ENCODE measurements at regions of chr4 and their contacts with region 1.

Region 1: GRCh38 chr4:153261461-153261860 is 57.2 kb downstream of the TRIM2 start:
- DNase-seq: no peak
- ATAC-seq: no peak
- H3K4me3 ChIP-seq: no peak overlapping the region
- H3K27ac ChIP-seq: no peak overlapping the region
- H3K4me1 ChIP-seq: peaks cover 6% of the 10 kb centered on the region; the same call in 1 of the 2 replicates
- H3K27me3 ChIP-seq: no peaks in the 10 kb centered on the region
- CTCF ChIP-seq: no peak

Region 2: GRCh38 chr4:153276971-153277370 is 15.5 kb after region 1 on chr4:
- CTCF ChIA-PET with region 1: no interaction called
- POLR2A ChIA-PET with region 1: interaction called, 10 read pairs
- in situ Hi-C with region 1: no loop called
- intact Hi-C with region 1: no loop called
- DNase-seq: no peak
- ATAC-seq: no peak
- H3K4me3 ChIP-seq: no peak overlapping the region
- H3K27ac ChIP-seq: no peak overlapping the region
- H3K4me1 ChIP-seq: no peaks in the 10 kb centered on the region
- H3K27me3 ChIP-seq: no peaks in the 10 kb centered on the region
- CTCF ChIP-seq: no peak

Region 3: GRCh38 chr4:153393397-153393796 is 131.9 kb after region 1 on chr4:
- CTCF ChIA-PET with region 1: no interaction called
- POLR2A ChIA-PET with region 1: no interaction called
- in situ Hi-C with region 1: no loop called
- intact Hi-C with region 1: no loop called
- DNase-seq: no peak
- ATAC-seq: no peak
- H3K4me3 ChIP-seq: no peak overlapping the region
- H3K27ac ChIP-seq: no peak overlapping the region
- H3K4me1 ChIP-seq: no peaks in the 10 kb centered on the region
- H3K27me3 ChIP-seq: no peaks in the 10 kb centered on the region
- CTCF ChIP-seq: no peak